ENCODE measurements at regions of chr12 and their contacts with region 1.

Region 1: DNA sequence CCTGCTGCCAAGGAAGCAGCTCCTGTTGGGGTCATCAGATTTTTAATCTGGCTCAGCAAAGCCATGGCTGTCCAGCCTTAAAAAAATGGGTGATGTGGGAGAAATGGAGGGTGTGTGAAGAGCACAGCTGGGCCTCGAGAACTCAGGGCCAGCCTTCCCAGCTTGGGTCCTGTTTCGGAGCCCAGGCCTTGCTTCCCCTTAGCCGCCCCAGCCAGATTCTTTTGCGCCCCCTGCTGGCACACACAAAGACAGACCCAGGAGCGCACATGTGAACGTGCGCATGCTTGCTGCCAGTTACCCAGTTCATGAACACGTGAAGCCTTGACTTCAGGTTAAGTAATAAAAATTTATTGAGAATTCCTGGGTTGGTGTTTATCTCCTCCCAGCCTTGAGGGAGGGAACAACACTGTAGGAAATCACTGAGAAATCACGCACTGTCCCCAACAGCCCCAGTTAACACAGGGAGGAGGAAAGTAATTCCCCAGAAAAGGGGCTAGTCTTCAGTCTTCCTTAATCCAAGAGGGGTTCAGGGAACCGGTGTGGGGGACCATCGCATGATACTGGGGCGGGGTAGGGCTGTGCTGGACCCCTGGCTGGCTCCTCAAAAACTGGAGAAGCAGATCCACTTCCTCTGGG is 5.3 kb downstream of the PHB2 start:
- DNase-seq: peak; percentile 82
- H3K4me3 ChIP-seq: peak overlapping the region; percentile 74 to 97 (median 94)
- H3K27ac ChIP-seq: peak overlapping the region; percentile 88
- H3K4me1 ChIP-seq: peaks cover 55% of the 10 kb centered on the region
- H3K27me3 ChIP-seq: no peaks in the 10 kb centered on the region
- CTCF ChIP-seq: peak; percentile 93 to 95

Region 2: DNA sequence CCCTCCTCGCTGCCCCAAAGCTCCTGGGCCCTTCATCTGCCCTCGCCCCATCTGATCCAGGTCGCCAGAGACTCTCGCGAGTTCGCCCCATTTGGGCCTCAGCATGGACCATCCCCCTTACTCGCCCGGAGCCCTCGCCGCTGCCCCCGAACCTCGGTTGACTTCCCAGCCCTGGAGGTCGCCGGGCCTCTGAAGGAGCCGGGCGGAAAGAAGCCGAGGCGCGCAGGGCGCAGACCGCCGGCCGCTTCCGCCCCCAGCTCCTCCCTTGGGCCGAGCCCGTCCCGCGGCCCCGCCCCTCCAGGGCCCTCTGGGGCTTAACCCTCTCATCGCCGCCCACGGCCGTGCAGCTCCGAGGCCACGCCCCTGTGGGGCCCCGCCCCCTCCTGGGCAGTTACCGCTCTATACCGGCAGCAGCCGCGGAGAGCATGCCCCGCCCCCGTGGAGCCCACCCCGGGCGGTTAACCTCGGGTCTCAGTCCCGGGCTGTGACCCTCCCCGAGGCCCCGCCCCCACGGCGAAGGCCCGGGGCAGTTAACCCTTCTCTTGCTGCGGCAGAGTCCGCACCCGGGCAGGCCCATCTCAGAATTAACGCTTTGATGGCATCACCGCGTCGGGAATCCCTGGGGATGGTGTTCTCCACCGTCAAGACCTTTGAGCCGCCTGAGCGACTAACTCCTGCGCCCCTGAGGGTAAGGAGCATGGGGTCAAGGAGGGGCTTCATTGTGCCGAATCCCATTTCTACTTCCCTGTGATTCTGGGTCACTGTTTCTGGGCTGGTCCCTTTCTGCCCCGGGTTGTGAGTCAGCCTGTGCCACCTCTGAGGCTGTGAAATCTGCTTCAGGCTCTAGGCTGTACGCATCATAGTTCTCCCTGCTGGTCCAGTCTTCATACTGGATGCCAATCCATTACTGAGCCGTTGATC is 91.8 kb before region 1 on chr12 and contains the start of gene SPSB2:
- CTCF ChIA-PET with region 1: interaction called, 8 read pairs
- dilution Hi-C with region 1: no loop called
- in situ Hi-C with region 1: loop called in 1 of 2 experiments (anchors 5 kb)
- intact Hi-C with region 1: loop called (anchors 1 kb)
- DNase-seq: peak; percentile 89
- H3K4me3 ChIP-seq: peak within 1 kb of the TSS; percentile 68 to 88 (median 84)
- H3K27ac ChIP-seq: peak within 1 kb of the TSS; percentile 56
- H3K4me1 ChIP-seq: peaks cover 45% of the 10 kb centered on the region
- H3K27me3 ChIP-seq: no peaks in the 10 kb centered on the region
- CTCF ChIP-seq: no peak
- total RNA-seq, gene SPSB2: 7.8 to 9.8 TPM

Region 3: GRCh38 chr12:6927379-6928024 is 37.6 kb before region 1 on chr12 and contains the start of gene ATN1:
- CTCF ChIA-PET with region 1: no interaction called
- dilution Hi-C with region 1: no loop called
- in situ Hi-C with region 1: no loop called
- intact Hi-C with region 1: loop called (anchors 1 kb)
- DNase-seq: peak; percentile 48
- H3K4me3 ChIP-seq: peak within 1 kb of the TSS; percentile 82 to 85 (median 84)
- H3K27ac ChIP-seq: peak within 1 kb of the TSS; percentile 65
- H3K4me1 ChIP-seq: peaks cover 46% of the 10 kb centered on the region
- H3K27me3 ChIP-seq: no peaks in the 10 kb centered on the region
- CTCF ChIP-seq: no peak
- total RNA-seq, gene ATN1: 12.2 to 73.5 TPM

Region 4: DNA sequence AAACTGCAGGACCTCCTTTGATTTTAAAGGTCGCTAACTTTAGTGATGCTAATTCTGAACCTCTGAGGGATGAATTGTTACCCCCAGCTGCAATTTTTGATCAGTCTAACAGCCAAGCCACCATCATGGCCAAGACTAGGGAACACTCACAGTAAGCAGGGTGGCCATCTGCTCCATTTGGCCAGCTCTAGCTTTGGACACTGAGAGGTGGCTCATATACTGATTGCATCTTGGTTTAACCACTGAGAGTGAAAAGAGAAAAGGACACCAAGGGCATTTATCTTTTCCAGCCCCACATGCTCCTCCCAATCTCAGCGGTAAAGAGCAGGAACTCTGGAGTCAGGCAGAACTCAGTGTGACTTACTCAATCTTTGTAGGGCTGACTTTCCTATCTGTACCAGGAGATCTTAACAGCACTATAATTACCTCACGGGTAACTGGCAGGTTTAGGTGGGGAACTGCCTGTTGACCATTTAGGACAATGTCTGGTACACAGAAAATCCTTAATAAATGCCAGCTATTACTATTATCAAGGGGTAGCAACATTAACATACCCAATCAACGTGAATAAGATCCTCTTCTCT is 47.0 kb after region 1 on chr12:
- CTCF ChIA-PET with region 1: no interaction called
- dilution Hi-C with region 1: loop called (anchors 5 kb)
- in situ Hi-C with region 1: no loop called
- intact Hi-C with region 1: no loop called
- DNase-seq: no peak
- H3K4me3 ChIP-seq: no peak overlapping the region
- H3K27ac ChIP-seq: no peak overlapping the region
- H3K4me1 ChIP-seq: peaks cover 7% of the 10 kb centered on the region
- H3K27me3 ChIP-seq: no peaks in the 10 kb centered on the region
- CTCF ChIP-seq: no peak

Region 5: DNA sequence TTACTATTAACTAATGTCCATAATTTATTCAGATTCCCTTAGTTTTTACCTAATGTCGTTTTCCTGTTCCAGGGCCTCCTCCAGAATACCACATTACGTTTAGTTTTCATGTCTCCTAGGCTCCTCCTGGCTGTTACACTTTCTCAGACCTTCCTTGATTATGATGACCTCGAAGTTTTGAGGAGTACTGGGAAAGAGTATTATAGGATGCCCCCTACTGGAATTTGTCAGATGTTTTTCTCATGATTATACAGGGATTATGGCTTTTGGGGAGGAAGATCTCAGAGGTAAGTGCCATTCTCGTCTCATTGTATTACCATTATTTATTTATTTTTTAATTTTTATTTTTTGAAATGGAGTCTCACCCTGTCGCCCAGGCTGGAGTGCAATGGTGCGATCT is 77.7 kb after region 1 on chr12:
- CTCF ChIA-PET with region 1: no interaction called
- dilution Hi-C with region 1: no loop called
- in situ Hi-C with region 1: no loop called
- intact Hi-C with region 1: loop called (anchors 2 kb)
- DNase-seq: peak; percentile 52
- H3K4me3 ChIP-seq: no peak overlapping the region
- H3K27ac ChIP-seq: no peak overlapping the region
- H3K4me1 ChIP-seq: peaks cover 13% of the 10 kb centered on the region
- H3K27me3 ChIP-seq: no peaks in the 10 kb centered on the region
- CTCF ChIP-seq: peak; percentile 40 to 56

Region 6: DNA sequence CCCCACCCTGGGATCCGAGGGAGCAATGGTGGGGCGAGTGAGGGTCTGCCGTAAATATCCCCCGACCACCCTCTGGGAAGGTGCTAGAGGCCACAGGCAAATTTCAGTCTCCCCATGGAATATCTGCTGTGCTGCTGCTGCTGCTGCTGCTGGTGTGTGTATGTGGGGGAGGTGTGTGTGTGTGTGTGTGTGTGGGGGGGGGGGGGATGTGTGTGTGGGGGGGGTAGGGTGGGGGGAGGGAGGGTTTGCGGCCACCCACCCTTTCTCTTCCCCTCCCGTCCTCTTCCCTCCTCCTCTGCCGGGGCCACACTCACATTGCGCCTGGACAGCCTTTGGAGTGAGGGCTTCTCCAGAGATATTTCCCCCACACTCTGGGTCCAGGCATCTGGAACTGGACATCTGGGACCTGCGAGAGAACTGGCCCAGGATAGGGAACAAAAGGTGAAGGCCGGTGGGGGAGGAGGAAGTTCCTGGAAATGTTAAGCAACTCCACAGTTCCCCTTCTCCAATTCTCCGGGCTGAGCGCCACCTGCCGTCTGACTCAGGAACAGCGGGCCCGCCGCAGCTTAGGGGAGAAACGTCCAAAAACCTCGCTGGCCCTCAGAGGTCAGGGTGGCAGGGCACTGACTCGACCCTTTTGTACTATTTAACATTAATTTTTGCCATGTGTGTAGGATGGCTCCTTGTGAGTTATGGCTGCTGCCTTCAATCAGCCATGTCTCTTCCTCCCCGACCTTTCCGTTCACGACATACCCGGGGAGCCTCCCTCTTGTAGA is 143.8 kb after region 1 on chr12 and contains the start of gene C1RL:
- CTCF ChIA-PET with region 1: no interaction called
- dilution Hi-C with region 1: no loop called
- in situ Hi-C with region 1: no loop called
- intact Hi-C with region 1: loop called (anchors 2 kb)
- DNase-seq: peak; percentile 75
- H3K4me3 ChIP-seq: peak within 1 kb of the TSS; percentile 75 to 80 (median 76)
- H3K27ac ChIP-seq: peak within 1 kb of the TSS; percentile 81
- H3K4me1 ChIP-seq: peaks cover 23% of the 10 kb centered on the region
- H3K27me3 ChIP-seq: no peaks in the 10 kb centered on the region
- CTCF ChIP-seq: peak; percentile 96 to 99
- total RNA-seq, gene C1RL: 32.1 to 38.3 TPM

Measured in mammary epithelial cell (primary cell).